CD4-positive, alpha-beta T cell (primary cell): ENCODE measurements at regions of chr1 and their contacts with region 1.

Region 1: GRCh38 chr1:59814180-59814900 is 409 bp upstream of the HOOK1 start:
- DNase-seq: peak; percentile 81 to 97 (median 92)
- ATAC-seq: peak; percentile 93
- H3K4me3 ChIP-seq: peak overlapping the region; percentile 82
- H3K4me3 Mint-ChIP-seq: no peak overlapping the region
- H3K27ac ChIP-seq: peak overlapping the region in 1 of 2 donors; percentile 32
- H3K27ac Mint-ChIP-seq: no peak overlapping the region
- H3K4me1 ChIP-seq: peaks cover 17% of the 10 kb centered on the region
- H3K4me1 Mint-ChIP-seq: peaks cover 5% of the 10 kb centered on the region
- H3K27me3 ChIP-seq: no peaks in the 10 kb centered on the region
- H3K27me3 Mint-ChIP-seq: peaks cover 15% of the 10 kb centered on the region
- CTCF ChIP-seq: no peak

Region 2: DNA sequence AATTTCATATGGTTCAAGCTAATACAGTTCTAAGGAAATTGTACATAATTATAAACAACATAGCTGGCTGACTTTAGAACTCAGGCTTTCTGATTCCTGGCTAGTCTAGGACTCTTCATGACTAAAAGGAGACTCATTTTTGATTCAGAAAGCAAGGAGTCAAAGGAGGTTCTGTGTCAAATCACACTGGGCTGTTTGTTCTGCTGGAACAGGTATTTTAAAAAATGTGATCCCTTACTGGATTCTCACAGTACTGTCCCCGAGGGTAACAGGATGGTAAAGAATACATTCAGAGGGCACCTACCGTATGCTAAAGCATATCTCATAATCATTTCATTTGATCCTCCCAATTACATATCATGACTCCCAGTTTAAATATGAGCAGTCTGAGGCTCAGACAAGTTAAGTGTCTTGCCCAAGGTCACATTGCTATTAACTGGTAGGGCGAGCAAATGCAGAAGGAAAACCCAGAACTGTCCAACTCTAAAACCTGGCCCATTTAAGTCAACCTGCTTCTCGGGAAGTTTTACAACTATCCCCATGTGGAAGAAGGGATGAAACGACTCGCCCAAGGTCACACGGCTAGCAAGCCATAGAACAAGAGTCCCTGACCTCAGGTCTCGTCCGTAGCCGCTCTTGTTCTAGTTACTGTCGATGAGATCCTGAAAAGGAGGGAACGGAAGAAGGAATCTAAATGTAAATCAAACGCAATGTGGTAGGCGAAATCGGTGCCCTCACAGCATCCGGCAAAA is 1115.2 kb before region 1 on chr1:
- CTCF ChIA-PET with region 1: no interaction called
- POLR2A ChIA-PET with region 1: no interaction called
- intact Hi-C with region 1: loop called in 1 of 2 experiments (anchors 5 kb)
- DNase-seq: no peak
- ATAC-seq: no peak
- H3K4me3 ChIP-seq: peak overlapping the region; percentile 89
- H3K4me3 Mint-ChIP-seq: peak overlapping the region; percentile 98
- H3K27ac ChIP-seq: peak overlapping the region; percentile 66 to 82
- H3K27ac Mint-ChIP-seq: peak overlapping the region; percentile 97
- H3K4me1 ChIP-seq: peaks cover 21% of the 10 kb centered on the region
- H3K4me1 Mint-ChIP-seq: peaks cover 4% of the 10 kb centered on the region
- H3K27me3 ChIP-seq: no peaks in the 10 kb centered on the region
- H3K27me3 Mint-ChIP-seq: no peaks in the 10 kb centered on the region
- CTCF ChIP-seq: no peak

Region 3: DNA sequence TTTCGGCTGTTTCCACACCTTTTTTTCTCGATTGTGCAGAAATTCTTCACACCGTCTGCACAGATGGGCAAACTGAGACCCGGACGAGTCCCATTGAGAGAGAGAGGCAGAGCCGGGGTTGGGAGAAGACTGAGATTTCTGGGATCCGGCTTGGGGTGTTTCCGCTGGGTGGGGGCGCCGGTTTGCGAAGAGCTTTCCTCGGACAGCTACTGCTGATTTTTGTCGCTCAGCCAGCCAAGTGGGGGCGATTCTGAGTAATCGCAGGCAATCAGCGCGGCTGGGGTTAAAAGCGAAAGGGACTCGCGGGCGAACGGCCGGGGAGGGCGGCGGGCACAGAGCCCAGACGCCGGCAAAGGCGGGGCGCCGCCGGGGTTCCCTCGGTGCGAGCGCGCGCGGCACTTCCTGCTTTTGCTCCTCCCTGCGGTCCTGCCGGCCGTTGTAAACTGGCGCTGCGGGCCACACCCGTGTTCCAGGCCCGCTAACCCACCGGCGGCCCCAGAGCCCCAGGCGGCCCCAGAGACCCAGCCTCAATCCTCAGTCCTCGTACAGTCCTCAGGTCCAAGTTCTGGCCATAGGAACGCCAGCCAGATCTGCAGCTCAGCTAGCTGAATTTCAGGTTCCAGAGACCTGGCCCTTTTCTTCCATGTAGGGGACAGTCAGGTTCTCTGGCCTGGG is 998.1 kb before region 1 on chr1:
- CTCF ChIA-PET with region 1: no interaction called
- POLR2A ChIA-PET with region 1: no interaction called
- intact Hi-C with region 1: loop called in 1 of 2 experiments (anchors 10 kb)
- DNase-seq: peak; percentile 69 to 91 (median 82)
- ATAC-seq: peak; percentile 69
- H3K4me3 ChIP-seq: peak overlapping the region; percentile 82
- H3K4me3 Mint-ChIP-seq: peak overlapping the region; percentile 90
- H3K27ac ChIP-seq: peak overlapping the region; percentile 61 to 71
- H3K27ac Mint-ChIP-seq: peak overlapping the region; percentile 79
- H3K4me1 ChIP-seq: peaks cover 47% of the 10 kb centered on the region
- H3K4me1 Mint-ChIP-seq: peaks cover 51% of the 10 kb centered on the region
- H3K27me3 ChIP-seq: no peaks in the 10 kb centered on the region
- H3K27me3 Mint-ChIP-seq: no peaks in the 10 kb centered on the region
- CTCF ChIP-seq: no peak

Region 4: DNA sequence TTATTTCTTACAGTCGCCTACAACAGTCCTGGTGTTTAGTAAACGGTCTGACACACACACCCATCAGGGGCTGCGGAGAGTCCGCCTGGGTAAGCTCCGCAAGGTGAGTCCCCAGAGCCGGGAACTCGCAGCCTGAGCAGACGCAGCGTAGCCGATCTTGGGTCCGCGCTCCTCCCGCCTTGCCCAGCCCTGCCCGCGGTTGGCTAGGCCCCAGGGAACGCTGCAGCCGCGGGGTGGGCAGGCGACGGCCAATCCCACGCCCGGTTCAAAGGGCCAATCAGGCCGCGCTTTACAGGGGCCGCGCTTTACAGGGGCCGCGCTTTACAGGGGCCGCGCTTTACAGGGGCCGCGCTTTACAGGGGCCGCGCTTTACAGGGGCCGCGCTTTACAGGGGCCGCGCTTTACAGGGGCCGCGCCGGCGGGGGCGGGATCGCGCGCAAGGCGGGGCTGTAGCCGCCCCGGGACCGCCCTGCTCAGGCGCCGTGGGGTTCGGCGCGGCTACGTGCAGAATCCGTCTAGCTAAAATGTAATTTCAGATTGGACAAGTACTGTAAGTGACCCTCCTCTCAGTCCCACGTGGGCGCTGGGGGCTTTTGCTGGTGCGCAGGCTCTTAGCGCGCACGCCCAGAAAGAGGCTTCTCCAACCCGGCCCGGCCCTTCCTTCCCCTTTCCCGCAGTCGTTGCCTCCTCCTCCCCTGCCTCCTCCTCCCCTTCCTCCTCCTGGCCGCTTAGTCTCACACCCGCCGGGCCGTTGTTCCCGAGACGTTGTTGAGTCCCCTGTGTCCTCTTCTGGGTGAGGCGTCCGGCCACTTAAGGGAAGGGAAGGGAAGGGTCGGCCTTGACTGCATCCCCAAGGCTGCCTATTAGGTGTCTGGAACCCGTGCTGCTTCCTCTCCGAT is 517.7 kb before region 1 on chr1 and contains the start of gene FGGY:
- CTCF ChIA-PET with region 1: no interaction called
- POLR2A ChIA-PET with region 1: interaction called, 6 read pairs
- intact Hi-C with region 1: loop called in 1 of 2 experiments (anchors 10 kb)
- DNase-seq: peak; percentile 60 to 94 (median 77)
- ATAC-seq: peak; percentile 91
- H3K4me3 ChIP-seq: peak within 1 kb of the TSS; percentile 80
- H3K4me3 Mint-ChIP-seq: peak within 1 kb of the TSS; percentile 88
- H3K27ac ChIP-seq: peak within 1 kb of the TSS; percentile 74 to 76
- H3K27ac Mint-ChIP-seq: peak within 1 kb of the TSS; percentile 85
- H3K4me1 ChIP-seq: peaks cover 10% of the 10 kb centered on the region
- H3K4me1 Mint-ChIP-seq: peaks cover 16% of the 10 kb centered on the region
- H3K27me3 ChIP-seq: no peaks in the 10 kb centered on the region
- H3K27me3 Mint-ChIP-seq: no peaks in the 10 kb centered on the region
- CTCF ChIP-seq: no peak
- total RNA-seq, gene FGGY: 9.5 to 10.0 TPM

Region 5: DNA sequence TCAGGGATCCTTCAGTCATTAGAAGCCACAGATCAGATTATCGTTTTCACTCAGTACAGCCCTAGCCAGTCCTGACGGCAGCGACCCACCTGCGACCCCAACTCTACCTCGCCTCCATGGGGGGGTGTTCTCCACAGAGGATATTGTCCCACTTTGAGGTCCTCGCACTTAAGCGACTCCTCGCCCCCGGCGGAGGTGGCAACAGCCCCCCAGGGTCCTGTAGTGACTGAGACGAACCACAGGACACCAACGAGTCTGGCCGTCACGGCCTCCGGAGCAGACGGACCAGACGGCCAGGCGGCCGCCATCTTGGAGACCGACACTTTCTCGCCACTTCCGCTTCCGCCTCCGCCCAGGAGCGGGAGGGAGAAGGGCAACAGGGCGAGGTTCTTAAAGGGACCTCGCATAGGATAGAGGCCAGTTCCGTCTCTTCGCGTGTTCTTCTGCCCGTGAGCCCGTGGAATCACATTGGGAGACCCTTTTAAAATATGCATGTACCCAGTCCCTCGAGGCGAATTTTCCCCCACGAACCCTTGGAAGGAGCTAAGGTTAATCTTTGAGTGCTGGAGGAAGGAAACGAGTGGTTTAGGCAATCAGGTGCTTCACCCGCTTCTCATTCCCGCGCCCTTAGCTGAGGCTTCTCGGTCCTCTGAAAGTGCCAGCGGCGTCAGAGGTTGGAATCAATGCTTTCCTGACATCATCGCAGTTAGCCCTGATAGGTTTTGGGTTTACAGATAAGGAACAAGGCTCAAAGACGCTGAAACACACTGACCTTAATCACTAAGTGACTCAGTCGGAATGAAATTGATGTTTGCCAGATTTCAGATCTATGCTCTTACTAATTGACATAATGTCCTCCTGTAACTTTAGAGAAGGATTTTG is 1910.7 kb after region 1 on chr1 and contains the start of gene TM2D1:
- CTCF ChIA-PET with region 1: no interaction called
- POLR2A ChIA-PET with region 1: no interaction called
- intact Hi-C with region 1: loop called in 1 of 2 experiments (anchors 10 kb)
- DNase-seq: peak; percentile 65 to 92 (median 78)
- ATAC-seq: peak; percentile 91
- H3K4me3 ChIP-seq: peak within 1 kb of the TSS; percentile 93
- H3K4me3 Mint-ChIP-seq: peak within 1 kb of the TSS; percentile 97
- H3K27ac ChIP-seq: peak within 1 kb of the TSS; percentile 87 to 91
- H3K27ac Mint-ChIP-seq: peak within 1 kb of the TSS; percentile 97
- H3K4me1 ChIP-seq: peaks cover 17% of the 10 kb centered on the region
- H3K4me1 Mint-ChIP-seq: peaks cover 40% of the 10 kb centered on the region
- H3K27me3 ChIP-seq: no peaks in the 10 kb centered on the region
- H3K27me3 Mint-ChIP-seq: no peaks in the 10 kb centered on the region
- CTCF ChIP-seq: no peak
- total RNA-seq, gene TM2D1: 12.0 to 13.7 TPM